GM10248 (cell line): ENCODE measurements at regions of chr5 and their contacts with region 1.

Region 1: GRCh38 chr5:52864371-52864770 is 76.7 kb downstream of the ITGA1 start:
- DNase-seq: no peak
- CTCF ChIP-seq: no peak

Region 2: DNA sequence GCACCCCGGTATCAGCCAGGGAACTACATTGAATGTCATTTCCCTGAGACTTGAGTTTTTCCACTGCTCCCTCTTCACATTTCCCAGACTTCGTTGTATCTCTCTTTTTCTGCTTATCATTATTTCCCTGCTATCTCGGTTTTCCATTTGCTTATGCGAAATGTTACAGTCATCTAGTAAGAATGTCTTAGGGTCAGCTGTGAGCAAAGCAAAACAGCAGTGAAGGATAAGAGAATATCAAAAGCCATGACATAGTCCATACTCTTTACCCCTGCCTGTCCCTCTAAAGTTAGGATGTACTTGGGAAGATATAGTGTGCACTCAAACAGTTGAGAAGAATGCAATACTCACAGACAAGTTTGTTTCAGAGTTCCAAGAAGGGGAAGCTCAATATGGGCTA is 12.1 kb after region 1 on chr5:
- CTCF ChIA-PET with region 1: interaction called, 17 read pairs
- POLR2A ChIA-PET with region 1: no interaction called
- DNase-seq: no peak
- CTCF ChIP-seq: no peak